HepG2 (cell line): ENCODE measurements at regions of chr10 and their contacts with region 1.

Region 1: DNA sequence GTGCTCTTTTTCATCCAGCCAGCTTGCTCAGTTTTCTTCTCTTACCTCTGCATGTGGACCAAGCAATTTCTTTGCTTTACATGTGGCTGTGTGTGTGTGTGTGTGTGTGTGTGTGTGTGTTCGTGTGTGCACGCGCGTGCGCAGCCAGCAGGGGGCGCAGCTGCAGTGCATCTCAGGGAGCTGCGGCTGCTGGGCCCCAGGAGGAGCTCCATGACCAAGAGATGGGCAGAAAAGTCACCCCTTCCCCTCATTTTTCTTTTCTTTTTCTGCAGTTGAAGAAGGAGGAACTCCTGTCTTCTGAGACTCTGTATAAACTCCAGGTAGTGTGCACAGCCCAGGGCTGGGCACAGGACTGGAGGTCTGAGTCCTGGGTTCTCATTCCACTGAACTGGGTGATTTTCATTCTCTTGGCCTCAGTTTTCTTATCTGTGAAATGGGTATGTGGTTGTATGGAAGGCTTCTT is 41.8 kb downstream of the BLNK start:
- DNase-seq: peak; percentile 58
- ATAC-seq: peak; percentile 72
- H3K4me3 ChIP-seq: no peak overlapping the region
- H3K27ac ChIP-seq: peak overlapping the region; percentile 42
- H3K4me1 ChIP-seq: peaks cover 18% of the 10 kb centered on the region
- H3K27me3 ChIP-seq: no peaks in the 10 kb centered on the region
- CTCF ChIP-seq: peak; percentile 94
- EP300 ChIP-seq: no peak
- POLR2A ChIP-seq: no peak
- RAD21 ChIP-seq: peak; percentile 91

Region 2: GRCh38 chr10:96292971-96293920 is 63.6 kb after region 1 on chr10:
- CTCF ChIA-PET with region 1: interaction called, 16 read pairs
- POLR2A ChIA-PET with region 1: no interaction called
- in situ Hi-C with region 1: loop called (anchors 5 kb)
- intact Hi-C with region 1: loop called (anchors 1 kb)
- DNase-seq: peak; percentile 70
- ATAC-seq: peak; percentile 99
- H3K4me3 ChIP-seq: peak overlapping the region in 1 of 3 experiments; percentile 58; a peak in 2 of 6 replicates
- H3K27ac ChIP-seq: no peak overlapping the region
- H3K4me1 ChIP-seq: peaks cover 8% of the 10 kb centered on the region
- H3K27me3 ChIP-seq: peaks cover 0 to 16% of the 10 kb centered on the region in 2 experiments; a peak in 3 of 5 replicates
- CTCF ChIP-seq: peak; percentile 76
- EP300 ChIP-seq: no peak
- POLR2A ChIP-seq: no peak
- RAD21 ChIP-seq: peak; percentile 66; the same call in 1 of the 2 replicates

Region 3: DNA sequence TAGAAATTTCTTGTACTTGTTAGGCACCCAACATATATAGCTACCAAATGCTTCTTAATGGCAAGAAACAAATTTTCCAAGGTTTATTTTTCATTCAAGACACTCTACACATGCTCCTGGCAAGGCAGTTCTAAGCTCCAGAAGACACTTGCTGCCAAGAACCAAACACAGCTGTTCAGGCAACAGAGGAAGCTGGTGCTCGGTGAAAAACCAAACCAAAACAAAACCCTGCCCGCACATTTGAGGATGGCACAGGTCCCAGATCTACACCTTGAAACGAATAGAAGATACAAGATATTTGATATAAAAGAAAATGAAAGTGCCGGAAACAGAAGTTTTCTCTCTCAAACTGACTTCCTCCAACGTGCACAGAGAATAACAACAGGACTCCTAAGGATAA is 69.8 kb after region 1 on chr10:
- CTCF ChIA-PET with region 1: no interaction called
- POLR2A ChIA-PET with region 1: no interaction called
- in situ Hi-C with region 1: loop called (anchors 5 kb)
- intact Hi-C with region 1: no loop called
- DNase-seq: no peak
- ATAC-seq: no peak
- H3K4me3 ChIP-seq: no peak overlapping the region
- H3K27ac ChIP-seq: no peak overlapping the region
- H3K4me1 ChIP-seq: no peaks in the 10 kb centered on the region
- H3K27me3 ChIP-seq: peaks cover 1 to 16% of the 10 kb centered on the region in 2 experiments; a peak in 4 of 5 replicates
- CTCF ChIP-seq: no peak
- EP300 ChIP-seq: no peak
- POLR2A ChIP-seq: no peak
- RAD21 ChIP-seq: no peak

Region 4: GRCh38 chr10:96395931-96396877 is 166.6 kb after region 1 on chr10:
- CTCF ChIA-PET with region 1: no interaction called
- POLR2A ChIA-PET with region 1: no interaction called
- in situ Hi-C with region 1: no loop called
- intact Hi-C with region 1: no loop called
- DNase-seq: peak; percentile 41
- ATAC-seq: peak; percentile 92
- H3K4me3 ChIP-seq: peak overlapping the region in 1 of 3 experiments; percentile 20; a peak in 1 of 6 replicates
- H3K27ac ChIP-seq: no peak overlapping the region
- H3K4me1 ChIP-seq: no peaks in the 10 kb centered on the region
- H3K27me3 ChIP-seq: peaks cover 7 to 82% of the 10 kb centered on the region in 2 experiments
- CTCF ChIP-seq: peak; percentile 84
- EP300 ChIP-seq: no peak
- POLR2A ChIP-seq: no peak
- RAD21 ChIP-seq: peak; percentile 71